Vagina (tissue), 2 donors: ENCODE measurements at regions of chr19 and their contacts with region 1.

Region 1: GRCh38 chr19:2273356-2274184 is 8.4 kb downstream of the PEAK3 start:
- DNase-seq: no peak
- H3K4me3 ChIP-seq: peak overlapping the region; percentile 22 to 37
- H3K27ac ChIP-seq: peak overlapping the region; percentile 99
- H3K4me1 ChIP-seq: peaks cover 59% of the 10 kb centered on the region
- H3K27me3 ChIP-seq: no peaks in the 10 kb centered on the region
- CTCF ChIP-seq: peak; percentile 91 to 98 (median 92)
- POLR2A ChIP-seq: no peak

Region 2: GRCh38 chr19:2096480-2097329 is 176.9 kb before region 1 on chr19 and contains the start of gene IZUMO4:
- intact Hi-C with region 1: no loop called
- DNase-seq: peak; percentile 97 to 99
- H3K4me3 ChIP-seq: peak within 1 kb of the TSS; percentile 59 to 63
- H3K27ac ChIP-seq: peak within 1 kb of the TSS; percentile 91
- H3K4me1 ChIP-seq: peaks cover 44% of the 10 kb centered on the region
- H3K27me3 ChIP-seq: no peaks in the 10 kb centered on the region
- CTCF ChIP-seq: peak in 1 of 3 experiments; percentile 26
- POLR2A ChIP-seq: peak in 1 of 2 donors; percentile 4
- total RNA-seq, gene IZUMO4: 7.9 TPM

Region 3: GRCh38 chr19:2168619-2169424 is 104.7 kb before region 1 on chr19:
- intact Hi-C with region 1: loop called (anchors 5 kb)
- DNase-seq: peak in 1 of 2 donors; percentile 97
- H3K4me3 ChIP-seq: peak overlapping the region in 1 of 2 donors; percentile 15
- H3K27ac ChIP-seq: peak overlapping the region; percentile 84
- H3K4me1 ChIP-seq: peaks cover 55% of the 10 kb centered on the region
- H3K27me3 ChIP-seq: no peaks in the 10 kb centered on the region
- CTCF ChIP-seq: no peak
- POLR2A ChIP-seq: no peak

Region 4: GRCh38 chr19:2199215-2199614 is 74.4 kb before region 1 on chr19:
- intact Hi-C with region 1: no loop called
- DNase-seq: no peak
- H3K4me3 ChIP-seq: no peak overlapping the region
- H3K27ac ChIP-seq: no peak overlapping the region
- H3K4me1 ChIP-seq: peaks cover 7% of the 10 kb centered on the region
- H3K27me3 ChIP-seq: no peaks in the 10 kb centered on the region
- CTCF ChIP-seq: no peak
- POLR2A ChIP-seq: no peak

Region 5: GRCh38 chr19:2213799-2214198 is 59.8 kb before region 1 on chr19:
- intact Hi-C with region 1: no loop called
- DNase-seq: no peak
- H3K4me3 ChIP-seq: no peak overlapping the region
- H3K27ac ChIP-seq: peak overlapping the region; percentile 15
- H3K4me1 ChIP-seq: peaks cover 11% of the 10 kb centered on the region
- H3K27me3 ChIP-seq: no peaks in the 10 kb centered on the region
- CTCF ChIP-seq: no peak
- POLR2A ChIP-seq: no peak

Region 6: DNA sequence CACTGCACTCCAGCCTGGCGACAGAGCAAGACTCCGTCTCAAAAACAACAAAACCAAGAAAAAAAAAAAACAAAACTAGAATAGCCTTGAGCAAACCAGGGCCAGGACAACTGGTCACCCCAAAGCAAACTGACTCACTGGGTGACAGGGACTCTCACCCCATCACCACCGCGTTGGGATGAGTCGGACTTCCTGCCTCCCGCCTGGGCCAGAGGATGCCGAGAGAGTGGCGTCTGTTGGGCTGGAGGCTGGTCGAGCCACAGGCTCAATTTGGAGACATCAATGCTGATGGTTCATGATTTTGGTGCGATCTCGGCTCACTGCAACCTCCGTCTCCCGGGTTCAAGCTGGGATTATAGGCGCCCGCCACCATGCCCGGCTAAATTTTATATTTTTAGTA is 98.1 kb after region 1 on chr19:
- intact Hi-C with region 1: no loop called
- DNase-seq: no peak
- H3K4me3 ChIP-seq: no peak overlapping the region
- H3K27ac ChIP-seq: no peak overlapping the region
- H3K4me1 ChIP-seq: no peaks in the 10 kb centered on the region
- H3K27me3 ChIP-seq: no peaks in the 10 kb centered on the region
- CTCF ChIP-seq: no peak
- POLR2A ChIP-seq: no peak